Aorta (tissue), 5 donors: ENCODE measurements at regions of chr17 and their contacts with region 1.

Region 1: DNA sequence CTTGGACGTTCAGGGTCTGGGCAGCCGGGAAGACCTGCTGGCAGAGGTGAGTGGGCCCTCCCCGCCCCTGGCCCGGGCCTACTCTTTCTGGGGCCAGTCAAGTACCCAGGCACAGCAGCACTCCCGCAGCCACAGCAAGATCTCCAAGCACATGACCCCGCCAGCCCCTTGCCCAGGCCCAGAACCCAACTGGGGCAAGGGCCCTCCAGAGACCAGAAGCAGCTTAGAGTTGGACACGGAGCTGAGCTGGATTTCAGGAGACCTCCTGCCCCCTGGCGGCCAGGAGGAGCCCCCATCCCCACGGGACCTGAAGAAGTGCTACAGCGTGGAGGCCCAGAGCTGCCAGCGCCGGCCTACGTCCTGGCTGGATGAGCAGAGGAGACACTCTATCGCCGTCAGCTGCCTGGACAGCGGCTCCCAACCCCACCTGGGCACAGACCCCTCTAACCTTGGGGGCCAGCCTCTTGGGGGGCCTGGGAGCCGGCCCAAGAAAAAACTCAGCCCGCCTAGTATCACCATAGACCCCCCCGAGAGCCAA is 8.6 kb upstream of the ABCC3 start:
- DNase-seq: peak; percentile 85 to 93
- ATAC-seq: peak; percentile 73
- H3K4me3 ChIP-seq: no peak overlapping the region
- H3K27ac ChIP-seq: no peak overlapping the region
- H3K4me1 ChIP-seq: no peaks in the 10 kb centered on the region
- H3K27me3 ChIP-seq: no peaks in the 10 kb centered on the region

Region 2: DNA sequence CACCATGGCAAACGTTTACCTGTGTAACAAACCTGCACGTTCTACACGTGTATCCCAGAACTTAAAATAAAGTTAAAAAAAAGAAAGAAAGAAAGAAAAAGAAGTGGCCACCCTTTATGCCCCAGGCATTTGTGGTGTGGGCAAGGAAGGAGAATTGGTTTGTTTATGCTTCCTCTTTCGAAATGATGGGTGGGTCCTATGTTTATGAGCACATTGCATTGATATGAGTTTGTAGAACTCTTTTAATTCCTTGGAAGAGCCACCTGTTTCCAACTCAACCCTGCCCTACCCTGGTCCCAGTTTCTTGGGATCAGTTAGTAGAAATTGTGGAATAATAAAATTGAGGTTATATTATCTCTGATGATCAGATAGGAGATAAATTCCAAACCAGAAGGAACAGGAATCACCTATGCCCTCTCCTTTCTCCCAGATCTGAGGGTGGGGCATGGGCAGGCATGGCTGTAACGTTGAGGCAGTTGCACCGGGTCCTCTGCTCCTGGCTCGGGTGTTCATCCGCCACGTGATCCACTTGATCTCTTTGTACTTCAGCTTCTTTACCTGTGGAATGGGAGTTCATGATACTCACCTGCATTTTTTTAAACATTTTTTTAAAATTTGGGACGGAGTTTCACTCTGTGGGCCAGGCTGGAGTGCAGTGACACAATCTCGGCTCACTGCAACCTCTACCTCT is 173.4 kb before region 1 on chr17:
- intact Hi-C with region 1: no loop called
- DNase-seq: no peak
- ATAC-seq: no peak
- H3K4me3 ChIP-seq: no peak overlapping the region
- H3K27ac ChIP-seq: no peak overlapping the region
- H3K4me1 ChIP-seq: no peaks in the 10 kb centered on the region
- H3K27me3 ChIP-seq: no peaks in the 10 kb centered on the region

Region 3: DNA sequence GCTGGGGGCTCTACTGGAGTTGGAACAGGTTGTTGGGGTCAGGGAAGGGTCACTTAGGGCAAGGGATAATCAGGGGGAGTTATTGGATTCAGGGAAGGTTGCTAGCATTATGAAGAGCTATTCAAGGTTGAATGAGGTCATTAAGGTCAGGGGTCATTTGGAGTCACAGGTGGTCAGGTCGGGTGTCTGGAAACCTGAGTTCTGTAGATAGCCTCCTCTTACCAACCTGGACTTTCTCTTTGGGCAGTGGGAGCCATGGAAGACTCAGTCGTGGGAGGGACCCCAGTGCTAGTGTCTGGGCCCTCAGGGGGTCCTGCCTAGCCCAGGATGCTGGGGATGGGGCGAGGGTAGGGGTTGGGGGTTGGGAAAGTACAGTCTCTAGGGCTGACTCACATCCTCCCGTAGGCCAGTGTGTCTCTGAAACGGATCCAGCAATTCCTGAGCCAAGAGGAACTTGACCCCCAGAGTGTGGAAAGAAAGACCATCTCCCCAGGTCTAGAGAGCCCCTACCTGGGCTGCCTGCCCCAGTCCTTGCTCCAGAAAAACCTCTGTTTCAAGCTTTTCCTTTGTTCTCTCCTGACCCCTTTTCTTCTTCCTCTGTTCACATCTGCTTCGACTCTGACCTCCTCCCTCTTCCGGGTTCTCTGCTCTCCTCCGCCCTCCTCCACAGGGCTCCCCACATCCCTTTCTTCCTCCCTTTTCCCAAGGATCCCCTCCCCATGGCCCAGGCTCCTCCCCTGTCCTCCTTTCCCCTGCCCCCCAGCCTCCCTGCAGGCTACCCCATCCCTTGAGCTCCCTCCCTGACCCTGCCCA is 42.1 kb after region 1 on chr17:
- intact Hi-C with region 1: loop called in 1 of 2 experiments (anchors 5 kb)
- DNase-seq: peak in 1 of 2 donors; percentile 57
- ATAC-seq: no peak
- H3K4me3 ChIP-seq: no peak overlapping the region
- H3K27ac ChIP-seq: no peak overlapping the region
- H3K4me1 ChIP-seq: no peaks in the 10 kb centered on the region
- H3K27me3 ChIP-seq: no peaks in the 10 kb centered on the region

Region 4: DNA sequence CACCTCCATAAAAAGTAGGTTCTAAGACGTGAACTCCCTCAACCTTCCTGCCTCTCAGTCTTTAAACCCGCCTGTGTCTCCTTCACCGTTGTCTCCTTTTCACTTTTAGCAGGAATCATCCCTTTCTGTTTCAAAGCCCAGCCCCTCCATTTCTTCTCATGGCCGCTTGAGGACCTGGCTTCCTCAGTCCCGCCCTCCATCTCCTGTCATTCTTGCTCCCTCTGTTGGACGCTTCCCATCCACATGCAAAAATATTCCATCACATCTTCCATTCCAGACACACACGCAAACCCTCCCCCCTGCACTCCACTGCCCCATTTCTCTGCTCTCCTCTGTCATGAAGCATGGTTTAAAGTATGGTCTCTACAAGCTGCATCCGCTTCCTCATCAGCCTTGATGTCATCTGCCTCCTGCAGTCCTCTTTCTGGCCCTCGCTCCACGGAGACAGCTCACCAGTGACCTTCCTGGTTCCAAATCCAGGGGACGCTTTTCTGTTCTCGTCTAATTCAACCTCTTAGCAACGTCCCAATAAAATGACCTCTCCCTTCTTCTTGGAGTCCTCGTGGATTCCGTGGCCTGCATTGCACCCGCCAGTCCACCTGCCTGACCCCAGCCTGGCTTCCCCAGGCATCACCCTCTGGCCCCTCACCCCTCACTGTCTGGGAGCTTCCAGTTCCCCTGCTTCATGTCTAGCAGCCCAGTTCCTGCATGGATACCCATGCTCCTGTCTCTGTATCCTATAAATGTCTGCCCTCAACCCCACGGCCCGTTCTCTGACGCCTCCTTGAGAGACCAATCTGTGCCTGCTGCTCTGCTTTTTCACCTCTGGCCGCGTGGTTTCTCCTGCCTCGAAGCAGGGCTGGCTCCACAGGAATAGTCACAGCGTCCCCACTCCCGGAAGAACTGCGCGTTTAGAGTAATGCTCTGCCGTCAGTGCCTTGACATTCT is 55.4 kb after region 1 on chr17:
- intact Hi-C with region 1: loop called in 1 of 2 experiments (anchors 5 kb)
- DNase-seq: peak in 1 of 2 donors; percentile 58
- ATAC-seq: peak; percentile 40
- H3K4me3 ChIP-seq: no peak overlapping the region
- H3K27ac ChIP-seq: no peak overlapping the region
- H3K4me1 ChIP-seq: no peaks in the 10 kb centered on the region
- H3K27me3 ChIP-seq: no peaks in the 10 kb centered on the region

Region 5: DNA sequence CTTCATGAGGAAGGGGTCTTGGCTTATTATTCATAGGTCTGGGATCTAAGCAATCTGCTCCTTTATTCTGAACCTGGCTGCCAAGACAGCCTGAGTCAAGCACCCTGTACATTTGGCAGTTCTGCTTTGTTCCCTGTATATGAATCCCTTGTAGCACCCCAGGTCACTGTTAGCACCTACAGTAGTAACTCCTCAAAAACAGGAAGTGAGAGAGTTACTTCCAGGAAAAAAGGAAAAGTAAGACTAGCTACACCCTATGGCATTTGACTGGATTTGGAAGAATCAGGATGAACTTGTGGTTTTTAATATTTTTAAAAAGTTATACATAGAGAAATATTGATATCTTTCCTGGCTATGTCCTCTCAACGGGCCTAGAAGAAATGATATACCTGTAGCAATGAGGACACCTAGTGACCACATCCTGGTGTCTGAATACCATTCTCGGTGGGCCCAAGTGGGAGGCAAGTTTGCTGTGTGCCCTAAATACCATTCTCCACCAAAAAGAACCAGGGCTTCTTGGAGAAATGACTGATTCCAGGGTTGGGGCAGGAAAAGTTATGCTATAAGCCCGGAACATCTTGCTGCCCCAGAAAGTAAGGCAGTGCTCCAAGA is 71.7 kb after region 1 on chr17:
- intact Hi-C with region 1: loop called (anchors 2 to 5 kb)
- DNase-seq: no peak
- ATAC-seq: no peak
- H3K4me3 ChIP-seq: no peak overlapping the region
- H3K27ac ChIP-seq: no peak overlapping the region
- H3K4me1 ChIP-seq: peaks cover 0 to 4% of the 10 kb centered on the region in 2 donors
- H3K27me3 ChIP-seq: no peaks in the 10 kb centered on the region

Region 6: DNA sequence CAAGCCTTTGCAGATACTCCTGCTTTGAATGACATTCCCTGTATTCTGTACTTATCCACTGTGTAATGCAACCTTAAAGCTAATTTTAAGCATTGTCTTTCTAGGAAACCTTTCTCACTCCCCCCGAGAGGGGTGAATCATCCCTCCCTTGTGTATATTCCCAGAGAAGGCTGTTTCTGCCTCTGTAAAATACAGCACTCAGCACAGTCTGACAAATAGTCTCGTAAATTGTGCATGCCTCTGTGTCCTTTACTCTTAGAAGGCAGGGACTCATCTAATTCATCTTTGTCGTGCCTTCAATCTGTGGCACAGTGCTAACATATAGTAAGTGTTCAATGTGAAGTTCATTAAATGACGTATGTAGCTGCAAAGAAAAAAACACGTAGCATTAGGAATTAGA is 1331.7 kb after region 1 on chr17:
- intact Hi-C with region 1: no loop called
- DNase-seq: no peak
- ATAC-seq: no peak
- H3K4me3 ChIP-seq: no peak overlapping the region
- H3K27ac ChIP-seq: no peak overlapping the region
- H3K4me1 ChIP-seq: no peaks in the 10 kb centered on the region
- H3K27me3 ChIP-seq: no peaks in the 10 kb centered on the region